Heart left ventricle (tissue), 16 donors: ENCODE measurements at regions of chr17 and their contacts with region 1.

Region 1: GRCh38 chr17:18866866-18867813 is 9.2 kb downstream of the PRPSAP2 start:
- DNase-seq: no peak
- ATAC-seq: no peak
- H3K4me3 ChIP-seq: no peak overlapping the region
- H3K27ac ChIP-seq: no peak overlapping the region
- H3K4me1 ChIP-seq: no peaks in the 10 kb centered on the region
- H3K27me3 ChIP-seq: no peaks in the 10 kb centered on the region
- CTCF ChIP-seq: no peak
- POLR2A ChIP-seq: no peak

Region 2: GRCh38 chr17:18910881-18911280 is 43.7 kb after region 1 on chr17:
- intact Hi-C with region 1: no loop called
- DNase-seq: no peak
- ATAC-seq: no peak
- H3K4me3 ChIP-seq: no peak overlapping the region
- H3K27ac ChIP-seq: no peak overlapping the region
- H3K4me1 ChIP-seq: no peaks in the 10 kb centered on the region
- H3K27me3 ChIP-seq: no peaks in the 10 kb centered on the region
- CTCF ChIP-seq: no peak
- POLR2A ChIP-seq: no peak

Region 3: GRCh38 chr17:18921912-18922451 is 54.8 kb after region 1 on chr17:
- intact Hi-C with region 1: loop called in 1 of 10 experiments (anchors 5 kb)
- DNase-seq: no peak
- ATAC-seq: no peak
- H3K4me3 ChIP-seq: no peak overlapping the region
- H3K27ac ChIP-seq: peak overlapping the region in 2 of 12 donors; percentile 35 to 61
- H3K4me1 ChIP-seq: peaks cover 0 to 27% (median 13%) of the 10 kb centered on the region in 12 donors
- H3K27me3 ChIP-seq: no peaks in the 10 kb centered on the region
- CTCF ChIP-seq: no peak
- POLR2A ChIP-seq: no peak